HepG2 (cell line): ENCODE measurements at regions of chr3 and their contacts with region 1.

Region 1: GRCh38 chr3:113947372-113948014 is at the start of gene ZDHHC23:
- DNase-seq: peak; percentile 40
- ATAC-seq: peak; percentile 78
- H3K4me3 ChIP-seq: peak within 1 kb of the TSS; percentile 64 to 87 (median 72)
- H3K27ac ChIP-seq: no peak within 1 kb of the TSS
- H3K4me1 ChIP-seq: peaks cover 4% of the 10 kb centered on the region; the same call in 1 of the 2 replicates
- H3K27me3 ChIP-seq: peaks cover 0 to 23% of the 10 kb centered on the region in 2 experiments; a peak in 2 of 5 replicates
- CTCF ChIP-seq: no peak
- EP300 ChIP-seq: no peak
- POLR2A ChIP-seq: no peak
- RAD21 ChIP-seq: 0 out of 2 replicates have a peak, but pooled peaks have one; percentile 12
- total RNA-seq, gene ZDHHC23: 7.8 and 8.8 TPM in 2 replicates

Region 2: DNA sequence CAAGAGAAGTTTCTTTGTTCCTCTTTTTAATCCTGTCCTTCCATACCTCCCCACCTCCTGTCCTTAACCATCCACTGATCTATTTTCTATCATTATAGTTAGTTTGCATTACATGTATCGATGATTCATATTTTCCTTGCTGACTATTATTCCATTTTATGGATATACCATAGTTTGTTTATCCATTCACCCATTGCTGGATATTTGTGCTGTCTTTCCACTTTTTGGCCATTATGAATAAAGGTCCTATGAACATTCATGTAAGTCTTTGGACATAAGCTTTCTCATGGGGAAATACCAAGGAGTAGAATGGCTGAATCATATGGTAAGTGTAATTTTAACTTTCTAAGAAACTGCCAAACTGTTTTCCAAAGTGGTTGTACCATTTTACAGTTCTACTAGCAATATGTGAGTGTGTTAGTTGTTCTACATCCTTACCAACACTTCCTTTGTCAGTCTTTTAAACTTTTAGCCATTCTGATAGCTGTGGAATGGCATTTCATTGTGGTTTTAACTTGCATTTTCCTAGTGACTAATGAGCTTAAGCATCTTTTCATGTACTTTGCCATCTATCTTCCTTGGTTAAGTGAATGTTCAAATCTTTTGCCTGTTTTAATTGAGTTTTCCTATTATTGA is 189.0 kb before region 1 on chr3:
- CTCF ChIA-PET with region 1: no interaction called
- POLR2A ChIA-PET with region 1: no interaction called
- in situ Hi-C with region 1: no loop called
- intact Hi-C with region 1: no loop called
- DNase-seq: no peak
- ATAC-seq: no peak
- H3K4me3 ChIP-seq: no peak overlapping the region
- H3K27ac ChIP-seq: no peak overlapping the region
- H3K4me1 ChIP-seq: no peaks in the 10 kb centered on the region
- H3K27me3 ChIP-seq: no peaks in the 10 kb centered on the region
- CTCF ChIP-seq: no peak
- EP300 ChIP-seq: no peak
- POLR2A ChIP-seq: no peak
- RAD21 ChIP-seq: no peak

Region 3: DNA sequence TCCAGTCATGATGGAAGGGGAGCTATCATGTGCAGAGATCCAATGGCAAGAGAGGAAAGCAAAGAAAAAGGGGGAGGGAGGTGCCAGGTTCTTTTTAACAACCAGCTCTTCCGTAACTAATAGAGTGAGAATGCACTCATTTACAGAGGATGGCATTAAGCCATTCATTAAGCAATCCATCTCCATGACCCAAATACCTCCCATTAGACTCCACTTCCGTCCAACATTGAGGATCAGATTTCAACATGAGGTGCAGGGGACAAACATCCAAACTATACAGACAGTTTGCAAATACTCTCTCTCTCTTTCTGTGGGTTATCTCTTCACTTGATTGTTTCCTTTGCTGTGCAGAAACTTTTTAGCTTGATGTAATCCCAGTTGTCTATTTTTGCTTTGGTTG is 21.5 kb after region 1 on chr3:
- CTCF ChIA-PET with region 1: no interaction called
- POLR2A ChIA-PET with region 1: no interaction called
- in situ Hi-C with region 1: no loop called
- intact Hi-C with region 1: loop called (anchors 1 kb)
- DNase-seq: peak; percentile 4
- ATAC-seq: no peak
- H3K4me3 ChIP-seq: no peak overlapping the region
- H3K27ac ChIP-seq: no peak overlapping the region
- H3K4me1 ChIP-seq: no peaks in the 10 kb centered on the region
- H3K27me3 ChIP-seq: no peaks in the 10 kb centered on the region
- CTCF ChIP-seq: no peak
- EP300 ChIP-seq: no peak
- POLR2A ChIP-seq: no peak
- RAD21 ChIP-seq: no peak

Region 4: GRCh38 chr3:114056130-114057010 is 108.9 kb after region 1 on chr3 and contains the starts of genes CCDC191 and QTRT2:
- CTCF ChIA-PET with region 1: no interaction called
- POLR2A ChIA-PET with region 1: no interaction called
- in situ Hi-C with region 1: no loop called
- intact Hi-C with region 1: loop called (anchors 1 kb)
- DNase-seq: peak; percentile 98
- ATAC-seq: peak; percentile 99
- H3K4me3 ChIP-seq: peak within 1 kb of the TSS; percentile 83 to 93 (median 84)
- H3K27ac ChIP-seq: peak within 1 kb of the TSS; percentile 73
- H3K4me1 ChIP-seq: peaks cover 24% of the 10 kb centered on the region
- H3K27me3 ChIP-seq: no peaks in the 10 kb centered on the region; a peak in 1 of 5 replicates
- CTCF ChIP-seq: 0 out of 2 replicates have a peak, but pooled peaks have one; percentile 6
- EP300 ChIP-seq: peak in 1 of 2 experiments; percentile 37; a peak in 2 of 4 replicates
- POLR2A ChIP-seq: peak; percentile 74 to 76
- RAD21 ChIP-seq: no peak
- total RNA-seq, gene CCDC191: 1.2 and 1.4 TPM in 2 replicates
- total RNA-seq, gene QTRT2: 33.4 and 38.0 TPM in 2 replicates